Activated naive CD4-positive, alpha-beta T cell treated with anti-CD3 and anti-CD28 coated beads for 36 hours (primary cell): ENCODE measurements at regions of chr1 and their contacts with region 1.

Region 1: GRCh38 chr1:181397845-181398244 is 85.5 kb upstream of the CACNA1E start:
- DNase-seq: peak; percentile 23
- H3K4me3 Mint-ChIP-seq: no peak overlapping the region
- H3K27ac Mint-ChIP-seq: no peak overlapping the region
- H3K4me1 Mint-ChIP-seq: peaks cover 39% of the 10 kb centered on the region
- H3K27me3 Mint-ChIP-seq: no peaks in the 10 kb centered on the region

Region 2: DNA sequence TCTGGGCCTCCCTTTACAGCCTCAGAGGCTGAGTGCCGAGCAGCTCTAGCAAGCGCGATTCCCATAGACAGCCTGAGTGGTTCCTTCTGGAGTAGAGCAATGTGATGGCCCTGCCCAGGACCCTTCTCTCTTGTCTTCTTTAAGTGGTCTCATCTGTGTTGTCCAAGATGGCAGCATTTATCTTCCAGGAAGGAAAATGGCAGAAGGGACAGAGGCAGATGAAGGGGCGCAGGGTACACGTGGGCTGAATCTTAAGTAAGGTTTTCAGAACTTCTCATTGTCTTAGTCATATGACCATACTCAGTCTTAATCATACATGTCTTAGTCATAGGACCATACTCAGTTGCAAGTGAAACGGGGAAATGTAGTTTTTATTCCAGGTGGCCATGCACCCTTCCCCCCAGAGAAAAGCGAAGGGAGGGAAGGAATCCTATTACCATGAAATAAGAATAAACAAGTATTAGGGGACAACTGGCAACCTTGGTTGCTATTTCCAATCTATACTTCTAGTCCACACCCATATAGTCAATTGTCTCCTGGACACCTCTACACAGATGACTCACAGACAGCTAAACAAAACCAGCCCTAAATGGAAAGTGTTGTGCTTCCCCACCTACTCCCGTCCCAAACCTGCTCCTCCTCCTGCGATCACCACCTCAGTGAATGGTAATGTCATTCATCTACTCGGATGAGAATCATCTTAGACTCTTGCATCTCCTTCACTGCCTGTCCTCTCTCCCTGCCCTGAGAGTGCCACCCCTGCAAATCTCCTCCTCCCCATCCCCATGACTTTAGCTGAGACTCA is 825.8 kb before region 1 on chr1:
- CTCF ChIA-PET with region 1: no interaction called
- intact Hi-C with region 1: loop called (anchors 5 kb)
- DNase-seq: peak; percentile 67
- H3K4me3 Mint-ChIP-seq: no peak overlapping the region
- H3K27ac Mint-ChIP-seq: peak overlapping the region; percentile 72
- H3K4me1 Mint-ChIP-seq: peaks cover 25% of the 10 kb centered on the region
- H3K27me3 Mint-ChIP-seq: peaks cover 10% of the 10 kb centered on the region

Region 3: GRCh38 chr1:181099152-181100014 is 298.5 kb before region 1 on chr1:
- CTCF ChIA-PET with region 1: no interaction called
- intact Hi-C with region 1: loop called (anchors 2 kb)
- DNase-seq: peak; percentile 80
- H3K4me3 Mint-ChIP-seq: peak overlapping the region; percentile 67
- H3K27ac Mint-ChIP-seq: peak overlapping the region; percentile 99
- H3K4me1 Mint-ChIP-seq: peaks cover 88% of the 10 kb centered on the region
- H3K27me3 Mint-ChIP-seq: no peaks in the 10 kb centered on the region

Region 4: GRCh38 chr1:181324797-181325616 is 72.8 kb before region 1 on chr1:
- CTCF ChIA-PET with region 1: no interaction called
- intact Hi-C with region 1: loop called (anchors 2 kb)
- DNase-seq: peak; percentile 77
- H3K4me3 Mint-ChIP-seq: no peak overlapping the region
- H3K27ac Mint-ChIP-seq: no peak overlapping the region
- H3K4me1 Mint-ChIP-seq: peaks cover 8% of the 10 kb centered on the region
- H3K27me3 Mint-ChIP-seq: peaks cover 1% of the 10 kb centered on the region

Region 5: DNA sequence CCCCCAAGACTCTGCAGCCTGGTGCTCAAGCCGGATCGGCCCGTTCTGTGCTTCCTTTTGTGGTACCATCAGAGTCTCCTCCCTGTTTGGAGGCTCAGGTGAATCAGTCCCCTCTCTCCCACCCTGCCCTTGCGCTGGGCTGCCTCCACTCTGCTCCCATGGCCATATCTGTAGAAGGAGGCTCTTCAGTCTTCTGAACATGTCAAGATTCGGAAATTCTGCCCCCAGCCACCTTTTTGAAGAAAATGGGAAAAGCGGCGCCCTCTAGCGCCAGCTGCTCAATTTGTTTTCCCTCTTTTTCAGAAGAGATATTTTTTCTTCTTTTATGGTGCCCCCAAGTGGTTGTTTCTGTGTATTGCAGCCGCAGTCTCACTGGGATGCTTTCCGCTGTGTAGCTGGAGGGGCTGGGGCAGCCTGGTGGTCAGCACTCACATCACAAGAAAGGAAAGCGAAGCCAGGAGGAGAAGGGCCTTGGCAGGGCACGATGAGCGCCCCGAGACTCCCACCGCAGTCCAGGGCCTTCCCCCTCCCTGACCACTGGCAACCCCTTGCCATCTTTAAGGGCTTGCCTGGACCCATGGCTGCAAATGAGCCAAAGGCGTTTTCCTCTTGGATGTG is 27.1 kb after region 1 on chr1:
- CTCF ChIA-PET with region 1: interaction called, 8 read pairs
- intact Hi-C with region 1: loop called (anchors 1 kb)
- DNase-seq: peak; percentile 91
- H3K4me3 Mint-ChIP-seq: peak overlapping the region; percentile 46
- H3K27ac Mint-ChIP-seq: no peak overlapping the region
- H3K4me1 Mint-ChIP-seq: peaks cover 16% of the 10 kb centered on the region
- H3K27me3 Mint-ChIP-seq: peaks cover 17% of the 10 kb centered on the region

Region 6: GRCh38 chr1:181438013-181438412 is 40.2 kb after region 1 on chr1:
- CTCF ChIA-PET with region 1: no interaction called
- intact Hi-C with region 1: no loop called
- DNase-seq: no peak
- H3K4me3 Mint-ChIP-seq: no peak overlapping the region
- H3K27ac Mint-ChIP-seq: no peak overlapping the region
- H3K4me1 Mint-ChIP-seq: no peaks in the 10 kb centered on the region
- H3K27me3 Mint-ChIP-seq: peaks cover 6% of the 10 kb centered on the region